ENCODE measurements at regions of chr11 and their contacts with region 1.

Region 1: DNA sequence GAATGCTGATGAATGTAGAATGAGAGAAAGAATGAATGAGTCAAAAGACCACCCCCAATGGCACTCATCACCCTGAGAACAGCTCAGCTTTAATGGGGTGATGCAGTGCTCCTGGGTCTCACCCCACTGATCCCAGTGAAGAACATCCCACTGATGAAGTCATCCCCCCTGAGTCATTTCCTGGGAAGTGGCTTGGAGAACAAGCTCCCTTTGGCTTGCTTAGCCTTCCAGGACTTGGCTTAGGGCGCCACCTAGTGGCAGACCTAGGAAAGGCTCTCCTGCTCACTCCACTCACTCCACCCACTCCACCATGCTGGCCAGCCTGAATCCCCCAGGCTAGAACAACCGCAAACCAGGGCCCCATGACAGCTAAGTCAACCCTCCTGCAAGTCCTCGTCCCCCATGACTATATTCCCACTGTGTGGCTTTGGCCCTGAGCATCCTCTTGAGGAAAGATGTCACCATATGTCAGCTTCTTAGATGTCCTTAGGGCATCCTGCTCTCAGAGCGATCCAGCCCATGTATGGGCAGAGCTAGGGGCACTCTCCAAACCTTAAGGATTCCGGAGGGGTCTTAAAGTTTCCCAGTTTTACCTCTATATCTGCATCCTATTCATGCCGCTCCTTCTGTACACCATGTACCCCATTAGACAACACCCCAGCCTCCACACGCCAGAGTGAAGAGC is 17.8 kb upstream of the TMPRSS13 start:
- H3K4me3 ChIP-seq: no peak overlapping the region
- H3K27ac ChIP-seq: no peak overlapping the region
- H3K4me1 ChIP-seq: no peaks in the 10 kb centered on the region
- CTCF ChIP-seq: peak; percentile 89

Region 2: DNA sequence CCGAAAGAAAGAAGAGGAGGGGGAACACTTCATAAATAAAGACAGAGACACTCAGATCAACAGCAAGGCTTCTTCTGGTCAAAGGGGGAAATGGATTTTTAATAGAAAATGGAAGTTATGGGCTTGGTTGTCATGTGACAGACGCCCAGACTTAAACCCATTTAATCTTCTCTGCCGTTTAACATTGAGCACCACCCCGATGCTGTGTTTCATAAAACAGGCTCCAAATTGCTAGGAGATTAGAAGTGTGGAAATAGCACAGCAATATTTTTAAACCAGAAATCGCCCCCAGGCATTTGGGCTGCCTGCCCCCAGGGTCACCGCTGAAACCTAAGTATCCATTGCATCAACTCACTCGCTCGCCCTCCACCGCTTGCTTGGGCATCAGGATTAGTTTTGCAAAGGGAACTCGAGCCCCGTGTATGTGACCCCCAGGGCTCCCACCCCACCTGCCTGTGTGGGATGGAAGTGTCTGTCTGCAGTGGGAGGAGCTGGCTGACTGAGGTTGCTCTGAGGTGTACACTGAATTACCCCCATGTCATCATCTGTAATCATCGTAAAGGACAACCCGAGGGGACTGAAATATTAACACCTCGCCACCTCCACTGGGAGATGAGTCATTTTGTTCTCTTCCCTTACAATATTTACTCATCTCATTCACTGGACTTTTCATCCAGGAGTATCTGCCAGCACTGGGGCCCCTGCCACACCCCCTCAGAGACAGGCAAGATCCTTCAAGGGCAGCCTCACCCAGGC is 160.7 kb before region 1 on chr11:
- CTCF ChIA-PET with region 1: no interaction called
- POLR2A ChIA-PET with region 1: no interaction called
- H3K4me3 ChIP-seq: no peak overlapping the region
- H3K27ac ChIP-seq: no peak overlapping the region
- H3K4me1 ChIP-seq: no peaks in the 10 kb centered on the region
- CTCF ChIP-seq: no peak

Region 3: DNA sequence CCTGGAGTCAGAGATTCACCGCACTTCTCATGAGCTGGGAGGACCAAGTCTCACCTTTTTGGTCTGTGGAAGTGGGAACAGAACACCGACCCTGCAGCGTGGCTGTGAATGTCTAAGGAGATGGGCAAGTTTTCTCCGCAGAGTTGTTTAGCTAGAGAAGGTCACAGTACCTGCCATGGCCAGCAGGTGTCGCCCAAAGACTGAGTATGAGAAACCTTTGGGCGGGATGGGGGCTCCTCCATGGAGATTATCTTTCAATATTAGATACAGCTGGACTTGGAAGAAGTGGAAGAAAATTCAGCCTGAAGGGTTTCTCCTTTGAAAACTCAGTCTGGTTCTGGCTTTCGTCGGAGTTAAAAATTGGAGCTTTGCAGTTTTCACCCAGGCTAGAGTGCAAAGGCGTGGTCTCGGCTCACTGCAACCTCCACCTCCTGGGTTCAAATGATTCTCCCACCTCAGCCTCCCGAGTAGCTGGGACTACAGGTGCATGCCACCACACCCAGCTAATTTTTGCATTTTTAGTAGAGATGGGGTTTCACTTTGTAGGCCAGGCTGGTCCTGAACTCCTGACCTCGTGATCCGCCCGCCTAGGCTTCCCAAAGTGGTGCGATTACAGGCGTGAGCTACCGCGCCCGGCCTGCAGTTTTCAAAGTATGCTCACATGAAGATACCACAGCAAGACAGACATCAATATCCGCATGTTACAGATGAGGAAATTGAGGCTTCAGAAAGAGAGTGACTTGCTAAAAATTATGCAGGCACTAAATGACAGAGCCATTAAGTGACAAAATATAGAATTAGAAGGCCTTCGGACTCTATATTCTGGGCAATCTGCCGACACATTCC is 139.3 kb before region 1 on chr11:
- CTCF ChIA-PET with region 1: interaction called, 46 read pairs
- POLR2A ChIA-PET with region 1: no interaction called
- H3K4me3 ChIP-seq: no peak overlapping the region
- H3K27ac ChIP-seq: no peak overlapping the region
- H3K4me1 ChIP-seq: no peaks in the 10 kb centered on the region
- CTCF ChIP-seq: peak; percentile 48; the same call in 1 of the 2 replicates

Region 4: DNA sequence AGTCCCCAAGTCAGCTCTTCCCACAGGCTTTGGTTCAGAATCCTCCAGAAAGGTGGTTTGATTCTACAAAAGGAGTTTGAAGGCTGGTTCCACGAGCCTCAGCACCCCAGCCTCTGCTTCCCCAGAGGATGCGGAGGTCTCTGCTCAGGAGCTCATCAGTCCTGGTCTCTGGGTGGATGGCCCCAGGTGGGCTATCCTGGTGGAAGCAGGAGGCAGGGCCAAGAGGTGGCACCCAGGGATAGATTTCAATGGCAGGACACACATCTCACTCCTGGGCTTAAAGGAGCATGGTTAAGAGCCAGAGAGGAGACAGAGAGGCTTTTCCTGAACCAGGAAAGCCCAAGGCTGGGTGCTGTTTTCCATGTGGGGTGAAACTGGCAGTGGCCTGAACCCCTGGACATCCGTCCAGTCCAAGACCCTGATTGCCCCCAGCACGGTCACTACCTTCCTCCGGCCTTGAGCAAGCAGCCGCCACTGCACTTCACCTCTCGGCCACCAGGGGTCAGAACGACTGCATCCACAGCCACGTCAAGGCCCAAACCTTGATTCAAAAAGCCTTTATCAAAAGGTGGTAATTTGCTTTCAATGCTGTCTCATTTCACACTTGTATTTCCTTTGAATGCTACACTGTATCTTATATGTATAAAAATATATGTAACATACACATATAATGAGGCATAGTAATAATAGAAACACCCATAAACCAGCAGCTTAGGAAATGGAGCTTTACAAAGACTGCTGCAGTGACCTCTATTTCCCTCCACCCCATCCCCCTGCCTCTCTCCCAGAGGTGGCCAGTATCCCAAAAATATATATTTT is 103.1 kb before region 1 on chr11:
- CTCF ChIA-PET with region 1: interaction called, 169 read pairs
- POLR2A ChIA-PET with region 1: no interaction called
- H3K4me3 ChIP-seq: no peak overlapping the region
- H3K27ac ChIP-seq: no peak overlapping the region
- H3K4me1 ChIP-seq: no peaks in the 10 kb centered on the region
- CTCF ChIP-seq: peak; percentile 64

Region 5: GRCh38 chr11:117870103-117870952 is 76.7 kb before region 1 on chr11:
- CTCF ChIA-PET with region 1: interaction called, 10 read pairs
- POLR2A ChIA-PET with region 1: no interaction called
- H3K4me3 ChIP-seq: no peak overlapping the region
- H3K27ac ChIP-seq: no peak overlapping the region
- H3K4me1 ChIP-seq: no peaks in the 10 kb centered on the region
- CTCF ChIP-seq: no peak

Region 6: DNA sequence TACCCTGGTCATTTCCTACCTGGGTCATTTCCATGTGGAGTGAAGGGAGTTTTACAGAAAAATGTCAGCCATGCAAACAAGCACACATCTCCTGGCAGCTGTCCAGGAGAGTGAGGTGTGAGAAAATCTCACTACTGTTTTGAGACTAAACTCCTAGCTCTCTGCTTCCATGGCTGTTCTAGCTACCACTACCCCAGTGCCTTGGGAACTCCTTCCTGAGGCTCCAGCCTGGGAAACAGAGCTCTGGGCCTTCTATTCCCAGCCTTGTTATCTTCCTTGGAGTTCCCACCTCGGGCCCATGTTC is 15.0 kb before region 1 on chr11:
- CTCF ChIA-PET with region 1: interaction called, 40 read pairs
- POLR2A ChIA-PET with region 1: no interaction called
- H3K4me3 ChIP-seq: no peak overlapping the region
- H3K27ac ChIP-seq: no peak overlapping the region
- H3K4me1 ChIP-seq: no peaks in the 10 kb centered on the region
- CTCF ChIP-seq: no peak